Natural killer cell (primary cell): ENCODE measurements at regions of chr6 and their contacts with region 1.

Region 1: DNA sequence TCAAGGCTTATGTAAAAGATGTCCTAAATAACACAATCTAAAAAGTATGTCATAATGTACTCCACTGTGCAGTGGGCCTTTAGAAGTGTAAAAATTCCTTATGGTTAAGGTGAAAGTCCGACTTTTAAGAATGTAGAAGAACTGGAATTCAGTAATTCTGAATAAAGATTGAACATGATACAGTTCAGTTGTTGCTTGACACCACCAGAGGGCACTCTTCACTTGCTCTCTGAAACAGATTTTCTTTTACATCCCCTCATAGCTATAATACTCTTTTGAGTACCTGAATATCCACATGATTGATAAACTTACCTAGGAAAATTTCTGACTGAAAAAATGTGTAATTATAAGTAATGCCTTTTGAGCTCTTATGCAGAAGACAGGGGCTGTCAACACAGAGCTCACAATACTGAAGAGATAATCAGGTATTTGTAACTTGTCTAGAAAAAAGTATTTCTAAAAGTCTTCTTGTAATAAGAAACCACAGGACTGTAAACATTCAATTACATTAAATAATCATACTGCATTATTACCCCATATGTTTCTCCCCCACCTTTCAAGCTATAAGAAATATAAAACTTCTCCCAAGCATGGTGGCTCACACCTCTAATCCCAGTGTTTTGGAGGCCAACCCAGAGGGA is 92.1 kb downstream of the POPDC3 start:
- DNase-seq: peak in 1 of 2 donors; percentile 76
- ATAC-seq: peak; percentile 63 to 74 (median 71)
- H3K4me3 ChIP-seq: no peak overlapping the region
- H3K4me3 Mint-ChIP-seq: no peak overlapping the region
- H3K27ac ChIP-seq: no peak overlapping the region
- H3K27ac Mint-ChIP-seq: no peak overlapping the region
- H3K4me1 ChIP-seq: no peaks in the 10 kb centered on the region
- H3K4me1 Mint-ChIP-seq: no peaks in the 10 kb centered on the region
- H3K27me3 ChIP-seq: no peaks in the 10 kb centered on the region
- H3K27me3 Mint-ChIP-seq: peaks cover 2 to 12% of the 10 kb centered on the region in 2 donors
- CTCF ChIP-seq: peak; percentile 87

Region 2: GRCh38 chr6:104955927-104956730 is 131.6 kb before region 1 on chr6:
- intact Hi-C with region 1: no loop called
- DNase-seq: no peak
- ATAC-seq: no peak
- H3K4me3 ChIP-seq: no peak overlapping the region
- H3K4me3 Mint-ChIP-seq: no peak overlapping the region
- H3K27ac ChIP-seq: no peak overlapping the region
- H3K27ac Mint-ChIP-seq: no peak overlapping the region
- H3K4me1 ChIP-seq: no peaks in the 10 kb centered on the region
- H3K4me1 Mint-ChIP-seq: peaks cover 0 to 5% of the 10 kb centered on the region in 2 donors
- H3K27me3 ChIP-seq: peaks cover 78% of the 10 kb centered on the region
- H3K27me3 Mint-ChIP-seq: peaks cover 62 to 80% of the 10 kb centered on the region in 2 donors
- CTCF ChIP-seq: no peak

Region 3: DNA sequence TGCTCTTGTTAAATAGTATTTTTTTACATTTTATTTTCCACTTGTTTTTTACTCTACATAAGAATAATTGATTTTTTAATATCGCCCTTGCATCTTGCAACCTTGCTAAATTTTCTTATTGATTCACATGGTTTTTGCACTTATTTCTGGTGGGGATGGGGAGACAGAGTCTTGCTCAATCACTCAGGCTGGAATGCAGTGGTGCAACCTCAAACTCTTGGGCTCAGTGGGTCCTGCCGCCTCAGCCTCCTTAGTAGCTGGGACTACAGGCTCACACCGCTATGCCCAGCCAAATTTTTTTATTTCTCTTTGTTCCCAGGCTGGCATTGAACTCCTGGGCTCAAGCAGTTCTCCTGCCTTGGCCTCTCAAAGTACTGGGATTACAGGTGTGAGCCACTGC is 100.5 kb before region 1 on chr6:
- intact Hi-C with region 1: no loop called
- DNase-seq: no peak
- ATAC-seq: no peak
- H3K4me3 ChIP-seq: no peak overlapping the region
- H3K4me3 Mint-ChIP-seq: no peak overlapping the region
- H3K27ac ChIP-seq: no peak overlapping the region
- H3K27ac Mint-ChIP-seq: no peak overlapping the region
- H3K4me1 ChIP-seq: no peaks in the 10 kb centered on the region
- H3K4me1 Mint-ChIP-seq: no peaks in the 10 kb centered on the region
- H3K27me3 ChIP-seq: no peaks in the 10 kb centered on the region
- H3K27me3 Mint-ChIP-seq: peaks cover 0 to 7% of the 10 kb centered on the region in 2 donors
- CTCF ChIP-seq: no peak

Region 4: DNA sequence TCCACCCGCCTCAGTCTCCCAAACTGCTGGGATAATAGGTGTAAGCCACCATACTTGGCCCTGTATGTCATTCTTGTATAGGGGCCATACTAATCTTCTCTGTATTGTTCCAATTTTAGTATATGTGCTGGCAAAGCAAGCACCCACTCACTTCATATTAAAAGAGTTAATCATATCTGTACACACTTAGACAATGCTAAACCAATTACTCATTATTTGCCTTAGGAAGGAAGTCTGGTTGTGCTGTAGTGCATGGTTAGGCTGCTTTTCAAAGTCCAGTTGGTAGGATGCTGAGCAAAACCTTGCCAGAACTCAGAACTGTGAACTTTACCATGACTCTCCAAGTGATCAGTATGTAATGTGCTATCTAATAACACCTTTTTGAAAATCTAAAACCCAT is 42.2 kb before region 1 on chr6:
- intact Hi-C with region 1: no loop called
- DNase-seq: no peak
- ATAC-seq: no peak
- H3K4me3 ChIP-seq: no peak overlapping the region
- H3K4me3 Mint-ChIP-seq: no peak overlapping the region
- H3K27ac ChIP-seq: no peak overlapping the region
- H3K27ac Mint-ChIP-seq: no peak overlapping the region
- H3K4me1 ChIP-seq: no peaks in the 10 kb centered on the region
- H3K4me1 Mint-ChIP-seq: no peaks in the 10 kb centered on the region
- H3K27me3 ChIP-seq: no peaks in the 10 kb centered on the region
- H3K27me3 Mint-ChIP-seq: peaks cover 12 to 17% of the 10 kb centered on the region in 2 donors
- CTCF ChIP-seq: no peak

Region 5: DNA sequence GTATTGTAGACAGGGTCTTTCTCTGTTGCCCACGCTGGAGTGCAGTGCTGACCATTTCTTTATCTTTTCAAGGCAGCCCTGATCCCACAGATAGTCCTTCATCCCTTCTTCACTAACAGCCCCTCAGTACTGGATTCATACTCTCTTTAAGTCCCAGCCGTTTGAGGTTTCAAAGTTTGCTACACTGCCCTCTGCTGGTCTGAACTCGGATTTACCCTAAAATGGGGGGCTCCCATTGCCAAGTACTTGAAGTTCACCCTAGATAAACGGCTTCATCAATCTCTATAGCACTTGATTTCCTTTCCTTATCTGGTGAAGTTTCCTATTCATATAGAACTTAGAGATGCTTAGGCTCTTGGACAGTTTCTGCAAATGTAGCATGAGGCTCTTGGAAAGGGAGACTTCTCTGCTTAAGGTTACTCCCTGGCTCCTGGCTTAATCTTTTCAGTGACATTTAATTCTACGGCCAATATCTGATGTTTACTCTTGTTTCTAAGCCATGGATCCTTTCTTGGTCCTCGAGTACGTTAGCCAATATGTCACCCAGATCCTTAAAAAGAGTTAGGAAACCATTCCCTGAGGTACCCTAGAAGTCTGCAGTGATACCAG is 336.6 kb after region 1 on chr6:
- intact Hi-C with region 1: loop called (anchors 1 kb)
- DNase-seq: peak; percentile 47 to 81
- ATAC-seq: peak; percentile 80 to 88 (median 81)
- H3K4me3 ChIP-seq: no peak overlapping the region
- H3K4me3 Mint-ChIP-seq: no peak overlapping the region
- H3K27ac ChIP-seq: no peak overlapping the region
- H3K27ac Mint-ChIP-seq: no peak overlapping the region
- H3K4me1 ChIP-seq: no peaks in the 10 kb centered on the region
- H3K4me1 Mint-ChIP-seq: peaks cover 0 to 4% of the 10 kb centered on the region in 2 donors
- H3K27me3 ChIP-seq: no peaks in the 10 kb centered on the region
- H3K27me3 Mint-ChIP-seq: peaks cover 0 to 8% of the 10 kb centered on the region in 2 donors
- CTCF ChIP-seq: peak; percentile 73